Cardiac septum (tissue), 1 donor: ENCODE measurements at regions of chr1 and their contacts with region 1.

Region 1: DNA sequence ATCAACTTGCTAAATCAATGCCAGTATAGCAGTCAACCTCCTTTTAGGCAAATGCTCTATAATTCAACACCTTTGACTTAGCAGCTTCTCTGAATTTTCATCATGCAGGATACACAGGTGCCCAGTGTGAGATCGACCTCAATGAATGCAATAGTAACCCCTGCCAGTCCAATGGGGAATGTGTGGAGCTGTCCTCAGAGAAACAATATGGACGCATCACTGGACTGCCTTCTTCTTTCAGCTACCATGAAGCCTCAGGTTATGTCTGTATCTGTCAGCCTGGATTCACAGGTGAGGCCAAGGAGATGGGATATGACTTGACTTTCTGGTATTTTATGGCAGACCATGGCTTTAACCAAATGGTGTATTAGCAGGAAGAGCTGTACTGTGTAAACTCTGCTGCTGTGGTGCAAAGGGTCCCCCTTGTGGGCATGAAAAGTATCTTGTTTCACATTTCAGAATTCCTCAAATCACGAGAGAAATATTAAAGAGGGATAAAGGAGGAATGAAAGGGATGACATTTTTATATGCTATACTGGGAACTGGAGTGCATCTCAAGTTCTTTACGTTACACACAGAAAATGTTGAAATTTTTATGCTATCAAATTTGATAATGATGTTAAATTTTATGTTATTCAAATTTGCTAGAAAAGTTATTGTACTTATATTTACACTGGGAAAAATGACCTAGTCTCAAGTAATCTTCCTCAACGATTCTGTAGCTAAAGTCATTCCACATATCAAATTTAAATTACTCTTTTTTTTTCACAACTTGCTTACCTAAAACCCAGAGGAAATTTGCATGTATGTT is 88.9 kb downstream of the CRB1 start:
- DNase-seq: no peak

Region 2: DNA sequence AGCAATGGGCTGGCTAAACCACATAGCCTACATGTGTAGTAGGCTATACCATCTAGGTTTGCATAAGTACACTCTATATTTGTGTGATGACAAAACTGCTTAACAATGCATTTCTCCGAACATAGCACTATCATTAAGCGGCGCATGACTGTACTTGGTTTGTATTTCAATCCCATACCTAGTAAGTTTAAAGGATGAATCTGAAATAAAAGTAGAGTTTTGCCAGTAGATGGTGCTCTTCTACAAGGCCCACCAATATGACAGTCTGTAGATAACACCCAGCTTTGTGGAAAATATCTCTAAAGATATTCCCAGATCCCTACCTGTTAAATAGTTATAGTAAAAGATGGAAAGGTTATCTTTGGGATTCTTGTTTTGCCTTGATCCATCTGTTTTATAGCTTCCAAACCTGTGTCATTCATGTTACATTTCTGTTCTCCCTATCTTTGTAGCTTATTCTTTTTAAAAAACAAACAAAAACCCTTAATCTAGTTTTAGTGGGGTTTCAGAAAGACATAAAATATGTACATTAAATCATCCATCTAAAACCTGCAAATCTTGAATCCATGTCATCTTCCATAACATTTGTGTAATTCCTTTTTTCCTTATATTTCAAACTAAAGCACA is 176.6 kb before region 1 on chr1:
- intact Hi-C with region 1: loop called (anchors 5 kb)
- DNase-seq: no peak

Region 3: GRCh38 chr1:197327776-197328364 is 29.1 kb before region 1 on chr1:
- intact Hi-C with region 1: loop called (anchors 2 kb)
- DNase-seq: no peak